ENCODE measurements at regions of chr20 and their contacts with region 1.

Region 1: GRCh38 chr20:330233-331149 is 5.1 kb downstream of the SOX12 start:
- DNase-seq: peak; percentile 72
- H3K4me3 ChIP-seq: peak overlapping the region in 1 of 2 experiments; percentile 23; a peak in 1 of 4 replicates
- H3K27ac ChIP-seq: peak overlapping the region; percentile 11 to 55; a peak in 1 of 4 replicates
- H3K4me1 ChIP-seq: peaks cover 22 to 31% of the 10 kb centered on the region in 2 experiments; a peak in 3 of 4 replicates
- H3K27me3 ChIP-seq: no peaks in the 10 kb centered on the region
- CTCF ChIP-seq: peak; percentile 90
- EP300 ChIP-seq: no peak
- RAD21 ChIP-seq: peak; percentile 83

Region 2: GRCh38 chr20:266596-267562 is 63.6 kb before region 1 on chr20:
- CTCF ChIA-PET with region 1: interaction called, 11 read pairs
- POLR2A ChIA-PET with region 1: interaction called, 3 read pairs
- DNase-seq: peak; percentile 91
- H3K4me3 ChIP-seq: peak overlapping the region; percentile 47 to 57
- H3K27ac ChIP-seq: no peak overlapping the region
- H3K4me1 ChIP-seq: peaks cover 0 to 3% of the 10 kb centered on the region in 2 experiments; a peak in 1 of 4 replicates
- H3K27me3 ChIP-seq: no peaks in the 10 kb centered on the region
- CTCF ChIP-seq: peak; percentile 91
- EP300 ChIP-seq: no peak
- RAD21 ChIP-seq: peak; percentile 86

Region 3: DNA sequence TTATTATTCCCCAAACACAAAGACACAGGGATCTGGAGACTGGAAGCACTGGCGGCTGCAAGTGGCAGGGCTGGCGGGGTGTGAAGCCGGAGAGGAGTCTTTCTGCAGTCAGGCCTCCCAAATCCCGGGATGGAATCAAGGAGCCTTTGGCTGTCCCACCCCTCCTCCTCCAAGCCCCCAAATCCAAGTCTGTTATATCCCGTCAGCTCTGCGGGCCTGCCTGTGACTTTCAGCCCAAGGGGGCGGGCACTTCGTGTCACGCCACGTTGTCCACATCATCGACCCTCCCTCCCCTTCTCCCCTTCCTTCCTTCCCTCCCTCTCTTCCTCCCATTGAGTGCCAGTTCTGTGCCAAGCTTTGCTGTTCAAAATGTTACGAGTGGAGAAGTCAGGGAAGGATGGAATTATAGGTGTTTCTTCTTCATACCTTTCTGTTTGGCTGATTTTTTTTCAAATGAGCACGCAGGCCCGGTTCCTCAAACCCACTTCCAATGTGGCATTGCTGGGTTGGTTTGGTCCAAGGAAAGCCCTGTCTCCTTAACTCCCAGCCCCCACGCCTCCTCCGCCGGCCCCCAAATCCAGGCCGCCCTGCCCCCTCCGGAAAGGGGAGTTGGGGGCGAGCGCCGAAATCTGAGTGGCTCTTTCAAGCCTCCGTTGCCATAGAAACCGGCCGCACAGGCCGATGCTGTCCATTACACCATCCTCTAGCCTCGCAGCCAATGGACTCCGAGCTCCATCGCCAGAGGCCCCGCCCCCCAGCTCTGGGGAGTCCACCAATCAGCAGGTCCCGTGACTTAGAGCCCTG is 20.4 kb before region 1 on chr20:
- CTCF ChIA-PET with region 1: interaction called, 21 read pairs
- POLR2A ChIA-PET with region 1: interaction called, 23 read pairs
- DNase-seq: peak; percentile 97
- H3K4me3 ChIP-seq: peak overlapping the region; percentile 53 to 69
- H3K27ac ChIP-seq: peak overlapping the region; percentile 97 to 99
- H3K4me1 ChIP-seq: peaks cover 15 to 26% of the 10 kb centered on the region in 2 experiments; a peak in 2 of 4 replicates
- H3K27me3 ChIP-seq: no peaks in the 10 kb centered on the region
- CTCF ChIP-seq: no peak
- EP300 ChIP-seq: no peak
- RAD21 ChIP-seq: no peak

Region 4: GRCh38 chr20:347640-348484 is 17.4 kb after region 1 on chr20:
- CTCF ChIA-PET with region 1: interaction called, 65 read pairs
- POLR2A ChIA-PET with region 1: interaction called, 39 read pairs
- DNase-seq: peak; percentile 100
- H3K4me3 ChIP-seq: peak overlapping the region; percentile 62 to 88
- H3K27ac ChIP-seq: peak overlapping the region; percentile 97 to 98
- H3K4me1 ChIP-seq: peaks cover 0 to 16% of the 10 kb centered on the region in 2 experiments; a peak in 2 of 4 replicates
- H3K27me3 ChIP-seq: no peaks in the 10 kb centered on the region
- CTCF ChIP-seq: no peak
- EP300 ChIP-seq: no peak; a peak in 1 of 4 replicates
- RAD21 ChIP-seq: no peak